ENCODE measurements at regions of chr1 and their contacts with region 1.

Region 1: DNA sequence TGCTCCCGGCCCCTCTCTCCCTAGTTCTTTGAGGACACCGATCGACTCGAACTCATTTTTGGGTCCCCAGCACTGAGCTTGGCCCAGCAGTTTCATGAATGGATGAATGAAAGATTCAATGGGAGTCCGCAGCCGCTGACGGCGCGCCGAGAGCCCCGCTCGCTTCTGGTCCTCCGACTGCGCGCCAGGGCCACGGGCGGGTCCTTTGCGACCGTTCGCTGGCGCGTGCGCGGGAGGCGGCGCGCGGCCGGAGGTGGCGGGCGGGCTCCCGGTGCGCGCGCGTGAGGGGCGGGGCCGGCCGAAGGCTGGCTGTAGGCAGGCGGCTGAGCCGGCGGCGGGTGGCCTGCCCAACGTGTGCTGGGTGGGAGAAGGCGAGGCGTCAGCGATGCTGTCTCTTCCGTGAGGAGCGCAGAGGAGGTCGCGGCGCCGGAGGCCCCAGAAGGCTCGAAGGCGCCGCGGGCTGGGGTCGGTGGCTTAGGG is at the start of gene MAST2:
- DNase-seq: peak; percentile 97
- H3K4me3 Mint-ChIP-seq: peak within 1 kb of the TSS; percentile 93
- H3K27ac Mint-ChIP-seq: peak within 1 kb of the TSS; percentile 78
- H3K4me1 Mint-ChIP-seq: peaks cover 28% of the 10 kb centered on the region
- H3K27me3 Mint-ChIP-seq: no peaks in the 10 kb centered on the region
- total RNA-seq, gene MAST2: 31.4 and 33.1 TPM in 2 replicates

Region 2: GRCh38 chr1:44068442-44068921 is 1734.9 kb before region 1 on chr1:
- intact Hi-C with region 1: no loop called
- DNase-seq: no peak
- H3K4me3 Mint-ChIP-seq: no peak overlapping the region
- H3K27ac Mint-ChIP-seq: no peak overlapping the region
- H3K4me1 Mint-ChIP-seq: peaks cover 3% of the 10 kb centered on the region
- H3K27me3 Mint-ChIP-seq: peaks cover 20% of the 10 kb centered on the region

Region 3: DNA sequence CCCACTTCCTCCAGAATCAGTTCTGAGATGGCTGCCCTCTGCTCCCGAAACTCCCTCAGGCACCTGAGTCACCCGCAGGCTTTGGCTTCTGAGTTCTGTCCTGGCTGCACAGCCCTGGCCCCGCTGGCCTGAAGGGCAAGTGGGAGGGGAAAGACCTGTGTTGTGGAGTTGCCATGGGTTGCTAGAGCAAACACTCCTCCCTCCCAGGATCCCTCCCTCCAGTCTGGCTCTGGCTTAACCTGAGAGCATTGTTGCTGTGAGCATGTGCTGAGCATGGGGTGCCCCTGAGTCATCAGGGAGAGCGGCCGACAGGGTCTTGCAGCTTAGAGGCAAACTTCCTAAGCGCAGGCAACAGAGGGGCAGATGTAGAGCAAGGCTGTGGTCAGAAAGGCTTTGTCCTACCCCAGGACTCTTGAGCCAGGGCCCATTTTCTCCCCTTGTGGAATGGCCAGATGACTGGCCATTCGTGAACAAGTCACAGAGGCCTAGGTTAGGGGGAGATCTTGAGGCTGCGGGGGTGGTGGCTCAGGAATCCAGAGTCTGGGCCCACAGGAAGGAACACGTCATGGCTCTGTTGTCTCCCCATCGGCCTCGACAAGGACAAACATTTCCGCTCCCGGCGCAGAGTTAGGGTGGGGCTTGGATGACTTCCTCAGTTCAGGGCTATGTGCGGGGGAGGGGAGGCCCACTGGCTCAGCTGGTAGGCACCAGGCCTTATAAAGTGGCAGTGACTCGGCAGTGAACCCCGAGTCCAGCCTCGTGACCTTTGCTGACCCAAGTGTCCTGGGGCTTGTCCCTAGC is 995.9 kb before region 1 on chr1 and contains the start of gene DYNLT4:
- intact Hi-C with region 1: loop called (anchors 5 kb)
- DNase-seq: peak; percentile 96
- H3K4me3 Mint-ChIP-seq: peak within 1 kb of the TSS; percentile 81
- H3K27ac Mint-ChIP-seq: peak within 1 kb of the TSS; percentile 99
- H3K4me1 Mint-ChIP-seq: peaks cover 81% of the 10 kb centered on the region
- H3K27me3 Mint-ChIP-seq: peaks cover 2% of the 10 kb centered on the region
- total RNA-seq, gene DYNLT4: 0.28 TPM in 1 of 2 replicates, not detected in the other

Region 4: GRCh38 chr1:45833361-45833760 is 30.0 kb after region 1 on chr1:
- intact Hi-C with region 1: no loop called
- DNase-seq: no peak
- H3K4me3 Mint-ChIP-seq: no peak overlapping the region
- H3K27ac Mint-ChIP-seq: no peak overlapping the region
- H3K4me1 Mint-ChIP-seq: no peaks in the 10 kb centered on the region
- H3K27me3 Mint-ChIP-seq: no peaks in the 10 kb centered on the region